Psoas muscle (tissue), 8 donors: ENCODE measurements at regions of chr13 and their contacts with region 1.

Region 1: DNA sequence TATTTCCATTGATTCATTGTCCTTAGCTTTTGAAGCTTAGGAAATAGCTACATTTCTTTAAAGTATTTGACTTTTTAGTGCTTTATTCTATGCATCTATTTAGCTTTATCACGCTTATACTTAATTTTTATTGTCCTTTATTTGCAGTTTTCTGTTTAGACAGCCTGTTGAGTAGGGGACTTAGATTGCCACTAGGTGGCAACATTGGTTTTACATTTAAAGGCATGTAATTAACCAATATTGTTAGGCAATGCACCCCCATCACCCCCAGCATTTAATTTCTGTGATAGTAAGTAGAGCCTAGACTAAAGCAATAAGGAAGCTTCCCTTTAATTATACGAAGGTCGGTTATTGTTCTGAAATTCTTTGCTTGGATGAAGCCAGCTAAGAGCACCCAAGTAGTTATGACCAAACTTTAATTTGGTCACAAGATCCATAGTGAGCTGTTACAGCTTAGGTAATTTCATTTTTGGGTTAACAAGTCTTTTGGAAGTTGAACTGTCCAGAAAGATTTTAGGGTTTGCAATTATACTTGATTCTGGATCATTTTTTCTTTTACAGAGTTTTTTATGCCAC is 36.5 kb downstream of the B3GLCT start:
- DNase-seq: no peak
- ATAC-seq: peak in 1 of 4 donors; percentile 60
- H3K4me3 ChIP-seq: no peak overlapping the region
- H3K27ac ChIP-seq: no peak overlapping the region
- H3K4me1 ChIP-seq: no peaks in the 10 kb centered on the region
- H3K27me3 ChIP-seq: no peaks in the 10 kb centered on the region
- CTCF ChIP-seq: peak; percentile 70

Region 2: DNA sequence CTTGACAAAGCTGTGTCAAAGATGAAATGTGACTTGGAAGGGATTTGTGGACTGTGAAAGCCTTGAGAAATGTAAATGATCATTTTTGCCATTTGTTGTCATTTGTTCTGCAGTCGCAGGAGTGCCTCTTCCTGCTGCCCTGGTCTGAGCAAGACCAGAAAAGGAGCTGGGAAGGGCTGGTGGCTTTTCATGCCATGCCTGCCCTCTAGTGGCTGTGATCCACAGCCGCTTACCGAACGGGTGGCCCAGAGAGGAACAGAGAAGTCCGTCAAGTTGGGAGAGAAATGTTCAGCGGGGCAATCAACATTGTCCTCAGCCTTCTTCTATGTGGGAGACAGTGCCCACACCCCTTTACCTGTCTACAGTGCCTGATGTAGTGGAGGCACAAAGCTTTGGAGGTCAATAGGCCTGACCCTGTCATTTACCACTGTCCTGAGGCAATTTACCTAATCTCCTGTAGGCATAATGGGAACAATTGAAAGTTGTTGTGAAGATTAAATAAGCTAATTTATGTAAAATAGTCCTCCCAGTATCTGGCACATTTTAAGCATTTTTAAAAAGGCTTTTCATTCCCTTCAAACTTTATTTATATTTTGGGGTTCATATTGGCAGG is 187.9 kb after region 1 on chr13:
- intact Hi-C with region 1: loop called (anchors 1 to 2 kb)
- DNase-seq: peak; percentile 71 to 85
- ATAC-seq: peak; percentile 94 to 97 (median 95)
- H3K4me3 ChIP-seq: no peak overlapping the region
- H3K27ac ChIP-seq: no peak overlapping the region
- H3K4me1 ChIP-seq: no peaks in the 10 kb centered on the region
- H3K27me3 ChIP-seq: peaks cover 0 to 3% (median 0%) of the 10 kb centered on the region in 3 donors
- CTCF ChIP-seq: peak; percentile 91

Region 3: DNA sequence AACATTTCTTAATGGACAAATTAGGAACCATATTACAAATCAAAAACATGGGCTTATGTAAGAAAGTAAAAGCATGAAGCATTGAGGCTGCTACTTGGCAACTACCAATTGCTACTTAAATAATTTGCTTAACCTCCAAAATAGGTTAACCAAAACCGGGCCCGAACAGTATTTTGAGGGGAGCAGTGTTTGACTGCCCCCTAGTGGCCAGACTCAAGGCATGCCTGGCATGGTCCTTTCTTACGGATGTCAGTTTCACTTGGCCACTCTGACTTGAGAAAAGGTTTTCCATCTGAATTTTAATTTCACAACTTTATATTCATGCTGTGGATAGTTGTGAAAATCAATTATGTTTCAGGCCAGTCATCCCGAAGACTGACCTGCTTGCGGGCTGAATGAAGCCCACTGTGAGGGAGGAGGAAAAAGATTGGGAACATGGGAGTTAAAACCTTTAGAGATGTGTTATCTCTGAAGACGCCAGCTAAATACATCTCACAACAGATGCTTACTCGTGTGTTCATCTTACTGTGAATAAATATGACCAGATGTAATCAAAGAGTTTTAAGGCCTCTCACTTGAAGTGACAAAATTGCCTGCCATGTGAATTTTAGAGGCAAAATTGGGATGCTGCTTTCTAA is 505.9 kb after region 1 on chr13:
- intact Hi-C with region 1: loop called in 1 of 2 experiments (anchors 5 kb)
- DNase-seq: peak; percentile 34 to 73
- ATAC-seq: peak; percentile 59 to 88 (median 70)
- H3K4me3 ChIP-seq: peak overlapping the region; percentile 13
- H3K27ac ChIP-seq: no peak overlapping the region
- H3K4me1 ChIP-seq: no peaks in the 10 kb centered on the region
- H3K27me3 ChIP-seq: no peaks in the 10 kb centered on the region
- CTCF ChIP-seq: peak; percentile 98

Region 4: DNA sequence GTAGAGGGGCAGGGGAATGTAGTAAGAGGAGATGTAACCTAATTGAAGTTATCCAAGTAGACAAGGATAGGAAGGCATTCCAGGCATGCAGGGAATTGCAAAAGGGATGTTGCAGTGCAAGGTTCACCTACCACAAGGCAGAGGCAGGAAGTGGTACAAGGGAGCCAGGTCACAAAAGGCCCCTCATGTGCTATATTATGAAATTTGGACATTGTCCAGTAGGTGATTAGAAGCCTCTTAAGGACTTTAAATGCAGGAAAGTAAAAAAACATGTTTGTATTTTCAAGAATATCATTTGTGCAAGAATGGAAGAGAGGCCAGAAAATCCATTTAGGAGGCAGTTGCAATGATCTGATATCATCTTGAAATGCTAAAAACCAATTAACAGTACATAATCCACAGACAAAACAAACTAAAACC is 906.7 kb after region 1 on chr13:
- intact Hi-C with region 1: no loop called
- DNase-seq: no peak
- ATAC-seq: no peak
- H3K4me3 ChIP-seq: no peak overlapping the region
- H3K27ac ChIP-seq: no peak overlapping the region
- H3K4me1 ChIP-seq: no peaks in the 10 kb centered on the region
- H3K27me3 ChIP-seq: no peaks in the 10 kb centered on the region
- CTCF ChIP-seq: no peak